Natural killer cell (primary cell): ENCODE measurements at regions of chr10 and their contacts with region 1.

Region 1: GRCh38 chr10:17847585-17848296 is 38.6 kb downstream of the MRC1 start:
- DNase-seq: peak in 1 of 2 donors; percentile 16
- ATAC-seq: peak in 1 of 3 donors; percentile 36
- H3K4me3 ChIP-seq: no peak overlapping the region
- H3K4me3 Mint-ChIP-seq: no peak overlapping the region
- H3K27ac ChIP-seq: no peak overlapping the region
- H3K27ac Mint-ChIP-seq: no peak overlapping the region
- H3K4me1 ChIP-seq: no peaks in the 10 kb centered on the region
- H3K4me1 Mint-ChIP-seq: peaks cover 0 to 12% of the 10 kb centered on the region in 2 donors
- H3K27me3 ChIP-seq: no peaks in the 10 kb centered on the region
- H3K27me3 Mint-ChIP-seq: peaks cover 0 to 20% of the 10 kb centered on the region in 2 donors
- CTCF ChIP-seq: peak; percentile 38

Region 2: DNA sequence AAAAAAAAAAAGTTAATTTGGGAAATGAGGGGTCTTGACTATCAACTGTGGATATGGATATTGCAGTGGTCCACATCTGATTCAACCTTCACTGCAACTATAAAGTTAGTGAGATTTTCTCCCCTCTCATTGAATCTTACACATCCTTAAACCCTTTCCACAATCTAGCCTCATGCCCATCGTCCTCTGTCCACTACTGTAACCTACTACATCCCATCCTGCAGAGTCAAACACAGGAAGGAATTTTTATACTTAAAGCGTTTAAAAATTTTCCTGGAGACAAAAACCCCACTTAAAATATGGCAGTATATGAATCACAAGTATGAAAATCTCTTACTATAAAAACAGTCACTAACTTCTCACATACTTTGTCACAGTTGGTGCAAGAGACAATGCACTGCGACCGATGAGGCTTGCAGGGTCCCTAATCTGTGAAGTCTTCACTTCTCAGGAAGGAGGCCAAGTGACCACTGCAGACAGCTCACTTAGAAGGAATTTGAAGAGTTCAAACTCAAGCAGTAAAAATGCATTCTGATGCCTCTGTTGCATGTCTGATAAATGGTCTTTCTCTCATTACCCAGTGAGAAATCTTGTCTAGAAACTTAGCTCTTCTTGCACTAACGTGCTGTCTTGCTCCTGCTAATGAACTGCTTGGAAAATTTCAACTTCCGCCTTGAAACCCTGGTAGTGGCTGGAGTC is 343.0 kb before region 1 on chr10:
- intact Hi-C with region 1: loop called (anchors 10 kb)
- DNase-seq: no peak
- ATAC-seq: no peak
- H3K4me3 ChIP-seq: no peak overlapping the region
- H3K4me3 Mint-ChIP-seq: peak overlapping the region; percentile 67
- H3K27ac ChIP-seq: peak overlapping the region; percentile 1
- H3K27ac Mint-ChIP-seq: peak overlapping the region; percentile 77 to 96
- H3K4me1 ChIP-seq: peaks cover 52% of the 10 kb centered on the region
- H3K4me1 Mint-ChIP-seq: peaks cover 68 to 74% of the 10 kb centered on the region in 2 donors
- H3K27me3 ChIP-seq: no peaks in the 10 kb centered on the region
- H3K27me3 Mint-ChIP-seq: no peaks in the 10 kb centered on the region
- CTCF ChIP-seq: no peak

Region 3: GRCh38 chr10:17861760-17862159 is 14.0 kb after region 1 on chr10:
- intact Hi-C with region 1: no loop called
- DNase-seq: no peak
- ATAC-seq: no peak
- H3K4me3 ChIP-seq: no peak overlapping the region
- H3K4me3 Mint-ChIP-seq: no peak overlapping the region
- H3K27ac ChIP-seq: no peak overlapping the region
- H3K27ac Mint-ChIP-seq: no peak overlapping the region
- H3K4me1 ChIP-seq: peaks cover 9% of the 10 kb centered on the region
- H3K4me1 Mint-ChIP-seq: peaks cover 14 to 22% of the 10 kb centered on the region in 2 donors
- H3K27me3 ChIP-seq: no peaks in the 10 kb centered on the region
- H3K27me3 Mint-ChIP-seq: peaks cover 0 to 3% of the 10 kb centered on the region in 2 donors
- CTCF ChIP-seq: no peak

Region 4: GRCh38 chr10:17872191-17873091 is 24.7 kb after region 1 on chr10:
- intact Hi-C with region 1: loop called (anchors 1 kb)
- DNase-seq: peak in 1 of 2 donors; percentile 50
- ATAC-seq: peak in 2 of 3 donors; percentile 41 to 46
- H3K4me3 ChIP-seq: no peak overlapping the region
- H3K4me3 Mint-ChIP-seq: no peak overlapping the region
- H3K27ac ChIP-seq: no peak overlapping the region
- H3K27ac Mint-ChIP-seq: no peak overlapping the region
- H3K4me1 ChIP-seq: no peaks in the 10 kb centered on the region
- H3K4me1 Mint-ChIP-seq: peaks cover 6% of the 10 kb centered on the region in 2 donors
- H3K27me3 ChIP-seq: no peaks in the 10 kb centered on the region
- H3K27me3 Mint-ChIP-seq: no peaks in the 10 kb centered on the region
- CTCF ChIP-seq: peak; percentile 57

Region 5: DNA sequence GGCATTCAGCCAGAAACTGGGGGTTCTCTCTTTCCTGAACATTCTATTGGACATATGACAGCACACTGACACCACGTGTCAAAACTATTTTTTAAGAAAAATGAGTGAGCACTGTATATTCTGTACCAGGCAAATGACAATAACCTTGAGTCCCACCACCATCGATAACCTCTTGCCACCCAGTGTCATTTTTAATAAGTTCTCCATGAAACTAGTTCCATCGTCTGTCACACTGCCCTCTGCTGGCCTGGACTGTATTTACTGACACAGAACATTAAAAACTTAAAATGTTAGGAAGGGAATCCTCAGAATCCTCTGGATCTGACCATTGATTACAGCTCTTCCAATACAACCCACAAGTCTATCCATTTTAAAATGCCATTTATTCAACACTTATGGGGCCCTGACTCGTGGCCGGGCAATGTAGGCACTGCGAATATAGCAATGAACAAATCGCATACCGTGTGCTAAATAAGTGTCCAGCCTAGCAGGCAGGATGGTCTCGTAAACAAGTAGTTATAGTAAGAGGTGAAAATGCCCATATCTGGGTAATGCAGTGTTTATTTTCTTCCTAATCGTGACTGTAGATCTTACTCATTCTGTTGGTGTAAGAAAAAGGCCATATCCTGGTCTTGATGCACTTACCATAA is 256.6 kb after region 1 on chr10:
- intact Hi-C with region 1: loop called (anchors 5 kb)
- DNase-seq: peak; percentile 20 to 46
- ATAC-seq: peak in 1 of 3 donors; percentile 43
- H3K4me3 ChIP-seq: no peak overlapping the region
- H3K4me3 Mint-ChIP-seq: no peak overlapping the region
- H3K27ac ChIP-seq: no peak overlapping the region
- H3K27ac Mint-ChIP-seq: no peak overlapping the region
- H3K4me1 ChIP-seq: no peaks in the 10 kb centered on the region
- H3K4me1 Mint-ChIP-seq: no peaks in the 10 kb centered on the region
- H3K27me3 ChIP-seq: no peaks in the 10 kb centered on the region
- H3K27me3 Mint-ChIP-seq: peaks cover 3 to 7% of the 10 kb centered on the region in 2 donors
- CTCF ChIP-seq: peak; percentile 49